ENCODE measurements at regions of chr20 and their contacts with region 1.

Region 1: DNA sequence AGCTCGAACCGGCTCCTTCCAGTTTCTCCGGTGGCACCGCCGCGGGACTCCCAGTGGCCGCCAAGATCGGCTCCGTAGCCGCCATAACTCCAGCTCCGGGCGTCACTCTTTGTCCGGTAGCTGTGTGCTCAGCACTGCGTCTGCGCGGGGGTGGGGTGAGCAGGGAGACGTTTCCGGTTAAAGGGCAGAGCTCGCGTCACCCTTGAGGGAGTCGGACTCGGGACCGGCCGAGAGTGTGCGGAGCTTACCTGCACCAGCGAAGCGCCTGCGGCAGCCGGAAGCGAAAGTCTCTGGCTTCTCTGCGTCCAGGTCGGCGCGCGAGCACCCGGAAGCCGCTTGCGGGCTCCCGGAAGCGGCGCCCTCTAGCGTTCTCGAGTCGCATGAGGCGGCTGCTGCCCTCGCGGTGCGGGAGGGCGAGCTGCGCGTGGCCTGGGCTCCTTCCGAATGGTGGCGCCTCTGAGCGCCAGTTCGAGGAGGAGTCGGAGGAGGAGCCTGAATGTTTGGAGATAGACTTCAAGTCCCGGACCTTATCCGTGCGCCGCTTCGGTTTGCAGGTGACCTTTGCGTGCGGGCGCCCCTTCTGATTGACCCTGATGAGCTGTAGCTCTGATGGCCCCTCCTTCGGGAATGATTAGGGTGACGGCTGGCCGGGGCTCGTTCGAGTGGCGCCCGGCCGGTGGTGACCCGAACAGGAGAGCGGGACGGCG is at the start of gene SCAND1:
- DNase-seq: peak; percentile 96
- CTCF ChIP-seq: peak; percentile 100

Region 2: DNA sequence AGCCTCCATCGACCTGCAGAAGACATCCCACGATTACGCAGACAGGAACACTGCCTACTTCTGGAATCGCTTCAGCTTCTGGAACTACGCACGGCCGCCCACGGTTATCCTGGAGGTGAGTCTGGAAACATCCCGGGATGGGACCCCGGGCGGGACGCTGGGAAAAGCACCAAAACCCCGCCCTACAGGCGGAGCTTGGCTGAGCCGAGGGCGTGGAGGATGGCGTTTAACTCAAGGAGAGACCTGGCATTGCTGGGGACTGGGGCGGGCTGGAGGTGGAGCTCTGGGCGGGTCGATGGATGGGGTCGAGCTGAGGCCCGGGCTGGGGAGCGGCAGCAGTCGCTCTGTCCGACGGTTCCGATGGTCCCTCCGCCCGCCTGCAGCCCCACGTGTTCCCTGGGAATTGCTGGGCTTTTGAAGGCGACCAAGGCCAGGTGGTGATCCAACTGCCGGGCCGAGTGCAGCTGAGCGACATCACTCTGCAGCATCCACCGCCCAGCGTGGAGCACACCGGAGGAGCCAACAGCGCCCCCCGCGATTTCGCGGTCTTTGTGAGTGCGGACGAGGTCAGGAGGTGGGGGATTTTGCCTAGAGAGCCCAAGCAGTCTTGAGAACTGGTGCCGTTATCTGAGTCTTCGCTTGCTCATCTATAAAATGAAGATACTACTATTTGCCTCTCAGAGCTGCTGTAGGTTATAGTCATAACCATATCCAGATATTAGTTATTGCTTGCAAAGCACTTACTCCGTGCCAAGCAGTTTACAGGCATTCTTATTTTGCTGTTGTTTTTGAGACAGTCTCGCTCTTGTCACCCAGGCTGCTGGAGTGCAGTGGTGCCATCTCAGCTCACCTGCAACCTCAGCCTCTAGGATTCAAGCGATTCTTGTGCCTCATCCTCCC is 334.9 kb before region 1 on chr20:
- CTCF ChIA-PET with region 1: interaction called, 10 read pairs
- POLR2A ChIA-PET with region 1: no interaction called
- DNase-seq: peak; percentile 81
- CTCF ChIP-seq: peak; percentile 75

Region 3: DNA sequence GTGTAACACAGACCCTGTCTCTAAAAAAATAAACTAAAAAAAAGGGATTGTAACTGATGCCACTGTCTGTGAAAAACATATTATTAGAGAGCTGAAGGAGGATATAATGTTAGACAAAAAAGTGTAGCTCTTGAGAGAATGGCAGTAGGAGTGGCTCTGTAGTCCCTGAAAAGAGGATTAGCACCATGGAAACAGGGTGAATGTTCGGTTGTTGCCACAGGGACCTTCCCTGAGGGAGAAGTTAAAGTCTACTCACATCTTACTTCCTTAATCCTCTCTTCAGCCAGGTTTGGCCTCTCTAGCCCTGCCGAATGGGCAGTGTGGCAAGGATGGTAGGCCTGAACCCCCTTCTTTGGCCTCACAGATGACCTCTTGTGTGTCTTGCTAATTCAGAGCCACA is 12.1 kb before region 1 on chr20:
- CTCF ChIA-PET with region 1: interaction called, 62 read pairs
- POLR2A ChIA-PET with region 1: interaction called, 3 read pairs
- DNase-seq: no peak
- CTCF ChIP-seq: no peak

Region 4: GRCh38 chr20:35978041-35978513 is 23.7 kb after region 1 on chr20:
- CTCF ChIA-PET with region 1: interaction called, 12 read pairs
- POLR2A ChIA-PET with region 1: no interaction called
- DNase-seq: no peak
- CTCF ChIP-seq: no peak

Region 5: DNA sequence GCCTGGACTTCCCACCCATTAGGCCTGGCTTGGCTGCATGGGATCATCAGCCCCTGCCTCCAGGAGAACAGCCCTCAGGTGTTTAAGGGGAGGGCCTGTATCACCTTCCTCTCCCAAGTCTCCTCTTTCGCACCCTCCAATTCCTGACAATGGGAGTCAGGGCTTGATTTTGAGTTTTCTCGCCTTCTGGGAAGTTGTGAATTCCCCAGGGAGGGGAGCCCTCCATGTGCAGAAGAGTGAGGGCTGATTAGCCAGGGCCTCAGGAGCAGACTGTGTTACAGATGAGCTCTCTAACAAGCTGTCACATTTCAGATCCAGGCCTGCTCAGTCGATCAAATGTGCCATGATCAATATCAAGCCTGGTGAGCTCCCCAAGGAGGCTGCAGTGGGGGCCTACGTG is 56.5 kb after region 1 on chr20:
- CTCF ChIA-PET with region 1: interaction called, 10 read pairs
- POLR2A ChIA-PET with region 1: no interaction called
- DNase-seq: no peak
- CTCF ChIP-seq: no peak

Region 6: DNA sequence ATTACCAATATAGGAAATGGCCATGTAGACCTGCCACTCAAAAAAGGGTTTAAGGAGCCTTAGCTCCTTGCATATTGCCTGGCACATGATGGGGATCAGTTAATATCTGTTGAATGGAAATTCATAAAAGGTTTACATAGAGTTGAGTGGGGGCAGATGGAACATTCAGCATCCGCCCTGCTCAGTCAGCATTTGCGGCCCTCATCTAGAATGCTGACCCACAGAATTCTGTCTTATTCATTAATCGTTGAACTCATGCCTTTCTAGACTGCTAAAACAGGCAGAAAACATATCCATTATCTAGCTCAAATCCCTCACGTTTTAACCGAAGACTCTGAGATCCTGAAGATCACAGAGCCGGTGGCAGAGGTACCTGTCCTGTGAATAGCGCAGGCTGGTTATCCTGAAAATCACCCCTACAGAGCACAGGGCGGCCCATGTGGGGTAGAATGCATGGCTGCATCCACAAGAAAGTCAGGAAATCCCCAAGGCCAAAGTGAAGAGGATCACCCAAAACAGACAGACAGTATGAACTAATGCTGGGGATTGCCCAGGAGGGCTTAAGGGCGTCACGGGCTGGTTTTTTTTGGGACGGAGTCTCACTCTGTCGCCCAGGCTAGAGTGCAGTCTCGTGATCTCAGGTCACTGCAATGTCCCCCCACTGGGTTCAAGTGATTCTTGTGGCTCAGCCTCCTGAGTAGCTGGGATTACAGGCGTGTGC is 73.9 kb after region 1 on chr20:
- CTCF ChIA-PET with region 1: no interaction called
- POLR2A ChIA-PET with region 1: no interaction called
- DNase-seq: no peak
- CTCF ChIP-seq: no peak